ENCODE measurements at regions of chr18 and their contacts with region 1.

Region 1: GRCh38 chr18:3623769-3624545 is 174.0 kb downstream of the TGIF1 start:
- DNase-seq: peak; percentile 98
- ATAC-seq: peak; percentile 96
- H3K4me3 ChIP-seq: peak overlapping the region; percentile 37 to 64 (median 52)
- H3K27ac ChIP-seq: peak overlapping the region; percentile 94
- H3K4me1 ChIP-seq: peaks cover 81% of the 10 kb centered on the region
- H3K27me3 ChIP-seq: peaks cover 0 to 1% of the 10 kb centered on the region in 2 experiments; a peak in 1 of 5 replicates
- CTCF ChIP-seq: peak; percentile 19; the same call in 1 of the 2 replicates
- EP300 ChIP-seq: peak; percentile 23 to 72
- POLR2A ChIP-seq: peak; percentile 93 to 94
- RAD21 ChIP-seq: peak; percentile 61

Region 2: DNA sequence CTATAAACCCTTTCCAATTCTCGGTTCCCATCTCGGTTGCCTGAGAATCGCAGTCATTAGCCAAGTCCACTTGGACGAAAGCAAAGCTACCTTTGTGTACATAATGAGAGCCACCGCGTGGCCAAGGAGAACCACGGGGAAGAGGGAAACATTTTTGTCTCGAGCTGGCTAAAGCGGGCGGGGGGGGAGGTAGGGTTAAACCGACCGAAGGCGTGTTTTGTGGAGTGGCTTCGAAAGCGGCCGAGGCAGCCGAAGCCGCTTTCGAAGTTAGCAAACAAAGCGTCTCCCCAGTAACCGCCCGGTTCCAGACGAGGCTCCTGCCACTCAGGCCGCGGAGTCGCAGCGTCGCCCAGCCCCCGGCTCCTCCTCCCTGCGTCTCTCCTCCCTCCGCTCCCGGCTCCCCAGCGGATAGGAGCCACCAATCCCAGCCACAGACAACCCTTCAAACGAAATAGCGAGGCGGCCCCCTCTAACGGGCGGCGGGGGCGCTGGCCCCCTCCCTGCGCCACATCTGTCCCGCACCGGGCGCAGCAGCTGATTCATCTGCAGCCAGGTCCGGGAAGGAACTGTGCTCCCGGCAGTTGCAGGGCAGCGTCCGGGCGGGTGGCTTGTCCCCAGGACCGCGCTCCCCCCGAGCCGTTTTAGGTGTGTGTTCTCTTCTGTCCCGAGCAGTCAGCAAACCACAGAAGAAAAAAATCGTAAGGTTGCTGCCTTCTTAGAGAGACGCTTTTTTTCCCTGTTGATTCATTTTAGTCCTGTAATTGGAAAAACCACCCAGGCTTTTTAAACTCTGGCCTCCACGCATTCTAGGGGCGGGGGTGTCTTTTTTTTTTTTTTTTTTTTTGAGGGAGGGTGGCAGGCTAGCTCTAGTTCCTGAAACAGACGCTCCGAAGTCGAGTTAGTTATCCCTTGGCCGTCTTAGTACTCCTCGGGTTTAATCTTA is 175.8 kb before region 1 on chr18:
- CTCF ChIA-PET with region 1: no interaction called
- POLR2A ChIA-PET with region 1: interaction called, 10 read pairs
- in situ Hi-C with region 1: loop called (anchors 10 kb)
- intact Hi-C with region 1: no loop called
- DNase-seq: peak; percentile 93
- ATAC-seq: peak; percentile 85
- H3K4me3 ChIP-seq: peak overlapping the region; percentile 68 to 93 (median 93)
- H3K27ac ChIP-seq: peak overlapping the region; percentile 88
- H3K4me1 ChIP-seq: peaks cover 19% of the 10 kb centered on the region
- H3K27me3 ChIP-seq: no peaks in the 10 kb centered on the region; a peak in 1 of 5 replicates
- CTCF ChIP-seq: peak; percentile 36
- EP300 ChIP-seq: peak in 1 of 2 experiments; percentile 44; a peak in 2 of 4 replicates
- POLR2A ChIP-seq: peak; percentile 84 to 90
- RAD21 ChIP-seq: peak; percentile 14; the same call in 1 of the 2 replicates

Region 3: GRCh38 chr18:3634250-3634939 is 10.4 kb after region 1 on chr18:
- CTCF ChIA-PET with region 1: no interaction called
- POLR2A ChIA-PET with region 1: interaction called, 14 read pairs
- in situ Hi-C with region 1: no loop called
- intact Hi-C with region 1: no loop called
- DNase-seq: peak; percentile 58
- ATAC-seq: no peak
- H3K4me3 ChIP-seq: no peak overlapping the region
- H3K27ac ChIP-seq: no peak overlapping the region
- H3K4me1 ChIP-seq: peaks cover 49% of the 10 kb centered on the region
- H3K27me3 ChIP-seq: no peaks in the 10 kb centered on the region; a peak in 1 of 5 replicates
- CTCF ChIP-seq: no peak
- EP300 ChIP-seq: peak in 1 of 2 experiments; percentile 49; a peak in 2 of 4 replicates
- POLR2A ChIP-seq: no peak
- RAD21 ChIP-seq: no peak

Measured in HepG2 (cell line).